Pancreas (tissue), 10 donors: ENCODE measurements at regions of chr5 and their contacts with region 1.

Region 1: DNA sequence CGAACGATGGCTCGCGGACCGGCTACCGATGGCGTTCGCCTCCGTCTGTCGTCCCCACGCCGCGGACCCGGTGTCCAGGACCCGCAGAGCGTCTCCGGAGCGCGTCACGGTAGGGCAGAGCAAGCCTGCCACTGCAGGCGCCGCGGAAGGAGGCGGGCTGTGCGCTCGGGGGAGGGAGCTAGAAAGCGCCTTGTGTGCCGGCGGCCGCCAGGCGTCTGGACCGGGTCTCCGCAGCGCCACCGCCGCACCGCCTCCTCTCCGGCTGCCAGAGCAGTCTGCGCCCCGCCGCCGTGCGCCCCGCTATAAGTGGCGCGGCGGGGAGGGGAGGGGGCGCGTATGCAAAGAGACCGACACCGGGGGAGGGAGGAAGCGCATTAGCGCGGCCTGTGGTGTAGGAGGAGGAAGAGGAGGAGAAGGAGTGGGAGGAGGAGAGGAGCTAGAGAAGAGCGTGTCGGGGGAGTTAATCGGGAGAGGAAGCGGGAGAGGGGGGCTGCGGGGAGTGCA is at the start of gene ENC1:
- DNase-seq: peak; percentile 82 to 95 (median 86)
- ATAC-seq: peak; percentile 81 to 89 (median 88)
- H3K4me3 ChIP-seq: peak within 1 kb of the TSS; percentile 64 to 81 (median 78)
- H3K27ac ChIP-seq: peak within 1 kb of the TSS; percentile 72 to 95 (median 84)
- H3K4me1 ChIP-seq: peaks cover 0 to 10% (median 0%) of the 10 kb centered on the region in 3 donors
- H3K27me3 ChIP-seq: no peaks in the 10 kb centered on the region
- CTCF ChIP-seq: peak; percentile 23 to 65 (median 46)
- total RNA-seq, gene ENC1: 21.4 to 63.1 (median 28.5) TPM

Region 2: GRCh38 chr5:74056789-74057164 is 583.7 kb before region 1 on chr5:
- intact Hi-C with region 1: loop called in 1 of 3 experiments (anchors 10 kb)
- DNase-seq: peak in 3 of 6 donors; percentile 34 to 57 (median 40)
- ATAC-seq: peak; percentile 69 to 98 (median 94)
- H3K4me3 ChIP-seq: no peak overlapping the region
- H3K27ac ChIP-seq: no peak overlapping the region
- H3K4me1 ChIP-seq: peaks cover 0 to 3% (median 0%) of the 10 kb centered on the region in 3 donors
- H3K27me3 ChIP-seq: no peaks in the 10 kb centered on the region
- CTCF ChIP-seq: peak in 3 of 4 donors; percentile 28 to 34 (median 33)

Region 3: DNA sequence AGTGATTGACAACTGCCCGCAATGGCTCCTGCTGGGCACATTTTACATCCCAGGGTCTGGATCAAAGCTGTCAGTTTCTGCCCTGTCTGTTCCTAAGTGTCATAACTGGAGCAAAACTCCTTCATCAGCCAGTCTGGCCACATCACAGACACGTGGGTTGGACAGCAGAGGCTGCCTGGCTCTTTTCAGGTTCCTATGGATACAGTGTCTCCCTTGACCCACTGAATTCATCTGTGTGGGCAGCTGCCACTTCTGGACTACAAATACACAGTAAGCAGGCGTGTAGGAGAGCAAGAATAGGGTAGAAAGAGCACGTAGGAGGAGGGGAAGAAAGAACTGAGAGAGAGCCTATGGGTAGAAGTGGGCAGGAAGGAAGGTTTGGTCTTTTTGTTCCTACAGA is 237.9 kb before region 1 on chr5:
- intact Hi-C with region 1: loop called in 1 of 3 experiments (anchors 5 kb)
- DNase-seq: no peak
- ATAC-seq: peak in 1 of 4 donors; percentile 17
- H3K4me3 ChIP-seq: no peak overlapping the region
- H3K27ac ChIP-seq: no peak overlapping the region
- H3K4me1 ChIP-seq: peaks cover 0 to 16% (median 0%) of the 10 kb centered on the region in 3 donors
- H3K27me3 ChIP-seq: no peaks in the 10 kb centered on the region
- CTCF ChIP-seq: no peak

Region 4: DNA sequence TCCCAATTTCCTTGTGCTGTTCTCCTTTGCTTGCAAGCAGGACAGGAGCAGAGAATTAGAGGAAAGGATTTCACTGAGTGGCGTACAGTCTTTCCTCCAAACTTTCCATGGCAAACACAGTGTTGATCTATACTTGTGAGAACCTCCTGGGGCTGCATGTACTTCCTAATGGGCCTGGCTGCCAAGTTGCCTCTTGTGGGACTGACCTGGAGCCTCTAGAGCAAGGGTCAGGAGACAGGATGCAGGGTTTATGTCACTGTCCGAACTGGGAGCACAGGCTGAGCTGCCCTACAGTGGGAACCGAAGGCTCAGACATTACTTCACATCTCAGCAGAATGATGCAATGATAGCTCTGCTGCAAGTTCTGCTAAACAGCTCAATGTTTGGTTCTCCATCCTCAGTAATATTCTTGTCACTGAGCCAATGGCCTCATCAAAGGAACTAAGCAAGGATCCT is 102.3 kb before region 1 on chr5:
- intact Hi-C with region 1: loop called in 1 of 3 experiments (anchors 10 kb)
- DNase-seq: peak in 4 of 6 donors; percentile 4 to 33 (median 19)
- ATAC-seq: peak in 3 of 4 donors; percentile 29 to 69 (median 54)
- H3K4me3 ChIP-seq: no peak overlapping the region
- H3K27ac ChIP-seq: peak overlapping the region in 2 of 4 donors; percentile 13 to 23
- H3K4me1 ChIP-seq: peaks cover 11 to 23% (median 11%) of the 10 kb centered on the region in 3 donors
- H3K27me3 ChIP-seq: no peaks in the 10 kb centered on the region
- CTCF ChIP-seq: no peak